Activated B cell treated with CpG ODN at 0.5 μM for 24 hours (primary cell): ENCODE measurements at regions of chr11 and their contacts with region 1.

Region 1: DNA sequence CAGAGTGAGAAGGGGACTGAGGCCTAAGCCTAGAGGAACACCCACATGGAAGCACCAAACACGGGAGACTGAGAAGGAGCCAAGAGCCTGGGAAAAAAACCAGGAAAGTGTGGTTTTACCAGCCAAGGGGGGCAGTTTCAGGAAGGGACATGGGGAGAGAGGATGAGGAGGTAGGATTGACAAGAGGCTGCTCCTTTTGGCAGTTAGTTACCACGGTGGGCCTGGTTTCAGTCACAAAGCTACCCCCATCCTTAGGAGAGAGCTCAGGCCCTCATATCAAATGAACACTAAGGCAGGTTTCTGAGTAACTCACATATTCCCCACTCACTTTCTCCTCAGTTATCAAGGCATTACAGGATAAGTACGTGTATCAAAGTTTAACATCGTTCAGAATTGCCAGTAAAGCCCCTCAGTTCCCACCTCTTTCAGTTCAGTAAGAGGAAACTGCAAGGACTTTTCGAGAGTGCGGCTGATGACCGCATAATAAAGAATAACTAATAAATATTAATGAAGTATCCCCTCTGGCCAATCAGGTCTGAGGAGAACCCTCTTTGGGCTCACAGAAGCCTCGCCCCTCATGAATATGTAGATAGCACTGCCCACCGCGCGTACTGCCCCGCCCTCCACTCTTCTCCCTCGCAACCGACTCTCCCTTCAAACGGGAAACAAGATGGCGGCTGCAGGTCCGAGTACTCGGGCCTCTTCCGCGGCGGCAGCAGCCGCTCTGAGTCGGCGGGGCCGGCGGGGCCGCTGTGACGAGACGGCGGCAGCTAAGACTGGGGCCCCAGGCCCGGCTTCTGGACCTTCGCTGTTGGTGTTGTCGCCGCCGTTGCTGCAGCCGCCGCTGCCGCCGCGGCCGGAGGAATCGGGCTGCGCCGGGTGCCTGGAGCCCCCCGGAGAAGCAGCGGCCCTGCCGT is at the start of gene RNF169:
- DNase-seq: peak; percentile 82
- ATAC-seq: peak; percentile 98
- H3K4me3 Mint-ChIP-seq: peak within 1 kb of the TSS; percentile 90
- H3K27ac Mint-ChIP-seq: peak within 1 kb of the TSS; percentile 95
- H3K4me1 Mint-ChIP-seq: peaks cover 32% of the 10 kb centered on the region
- H3K27me3 Mint-ChIP-seq: no peaks in the 10 kb centered on the region
- CTCF ChIP-seq: no peak
- total RNA-seq, gene RNF169: 20.4 and 22.2 TPM in 2 replicates

Region 2: DNA sequence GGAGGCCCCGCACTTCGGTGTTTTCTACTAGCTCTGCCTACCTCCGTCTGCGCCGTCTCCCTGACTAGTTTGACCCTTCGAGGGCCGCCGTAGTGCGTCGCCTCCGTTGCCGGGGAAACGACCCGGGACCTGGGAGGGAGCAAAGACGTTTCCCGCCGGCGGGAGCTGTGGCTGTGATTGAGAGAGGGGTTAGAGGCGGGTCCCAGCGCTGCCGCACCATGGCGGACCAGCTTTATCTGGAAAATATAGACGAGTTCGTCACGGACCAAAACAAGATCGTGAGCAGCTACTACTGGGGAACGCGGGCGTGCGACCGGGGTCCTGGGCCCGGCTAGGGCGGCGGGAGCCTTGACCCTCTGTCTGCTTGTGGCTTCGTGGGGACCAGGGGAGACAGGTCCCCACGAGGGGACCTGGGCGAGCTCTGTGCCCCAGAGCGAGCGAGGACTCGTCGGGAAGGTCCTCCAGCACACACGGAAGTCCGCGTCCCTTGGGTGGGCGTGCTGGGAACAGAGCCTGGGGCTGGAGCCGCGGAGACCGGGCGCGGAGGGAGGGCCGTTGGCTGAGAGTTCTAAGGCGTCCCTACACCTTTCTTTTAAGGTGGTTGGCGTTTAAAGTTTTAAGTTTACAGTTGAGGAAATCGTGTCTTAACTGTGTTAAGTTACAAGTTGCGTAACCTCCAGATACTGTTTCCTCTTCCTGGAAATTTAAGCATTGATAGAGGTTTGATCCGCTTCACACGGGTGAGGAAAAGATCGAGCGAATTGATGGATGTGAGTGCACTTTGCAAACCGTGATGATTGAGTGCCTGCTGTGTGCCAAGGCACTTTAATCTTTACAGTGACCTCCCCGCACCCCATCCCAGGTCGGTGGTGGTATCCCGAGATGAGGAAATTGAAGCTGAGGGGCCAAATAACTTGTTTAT is 155.8 kb before region 1 on chr11 and contains the start of gene POLD3:
- CTCF ChIA-PET with region 1: no interaction called
- POLR2A ChIA-PET with region 1: interaction called, 3 read pairs
- intact Hi-C with region 1: loop called (anchors 2 kb)
- DNase-seq: peak; percentile 83
- ATAC-seq: peak; percentile 99
- H3K4me3 Mint-ChIP-seq: peak within 1 kb of the TSS; percentile 94
- H3K27ac Mint-ChIP-seq: peak within 1 kb of the TSS; percentile 86
- H3K4me1 Mint-ChIP-seq: peaks cover 17% of the 10 kb centered on the region
- H3K27me3 Mint-ChIP-seq: no peaks in the 10 kb centered on the region
- CTCF ChIP-seq: no peak
- total RNA-seq, gene POLD3: 14.9 and 16.3 TPM in 2 replicates

Region 3: GRCh38 chr11:74773481-74773880 is 25.0 kb after region 1 on chr11:
- CTCF ChIA-PET with region 1: no interaction called
- POLR2A ChIA-PET with region 1: no interaction called
- intact Hi-C with region 1: loop called (anchors 2 kb)
- DNase-seq: no peak
- ATAC-seq: no peak
- H3K4me3 Mint-ChIP-seq: no peak overlapping the region
- H3K27ac Mint-ChIP-seq: no peak overlapping the region
- H3K4me1 Mint-ChIP-seq: peaks cover 47% of the 10 kb centered on the region
- H3K27me3 Mint-ChIP-seq: no peaks in the 10 kb centered on the region
- CTCF ChIP-seq: no peak

Region 4: DNA sequence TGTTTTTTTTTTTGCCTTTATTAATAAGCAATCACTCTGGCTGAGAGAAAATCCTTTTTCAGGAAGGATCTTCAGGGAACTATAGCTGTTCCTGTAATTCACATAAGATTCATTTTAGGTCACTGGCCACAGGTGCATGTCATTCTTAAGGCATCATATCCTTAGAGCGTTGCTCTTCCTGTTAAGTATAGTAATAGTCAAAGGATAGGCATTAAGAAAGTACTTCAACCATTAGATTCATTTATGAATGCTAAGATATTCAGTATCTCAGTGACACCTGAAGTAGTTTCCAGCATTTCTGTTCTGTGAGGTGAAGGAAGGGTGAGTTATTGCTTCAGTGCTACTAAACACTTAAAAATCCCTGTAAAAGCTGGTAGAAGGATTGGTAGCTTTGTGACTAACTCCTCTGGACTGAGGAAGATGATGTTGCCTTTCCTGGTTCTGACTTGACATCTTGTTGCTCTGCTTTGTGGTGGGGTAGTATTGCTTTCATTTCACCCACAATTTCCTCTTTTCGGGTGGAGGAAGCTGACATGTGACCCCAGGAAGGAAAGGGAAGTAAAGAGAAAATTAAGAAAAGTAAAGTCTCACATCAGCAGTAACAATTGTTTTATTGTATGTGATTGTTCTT is 34.9 kb after region 1 on chr11:
- CTCF ChIA-PET with region 1: no interaction called
- POLR2A ChIA-PET with region 1: interaction called, 7 read pairs
- intact Hi-C with region 1: loop called (anchors 1 kb)
- DNase-seq: no peak
- ATAC-seq: peak; percentile 86
- H3K4me3 Mint-ChIP-seq: peak overlapping the region; percentile 59
- H3K27ac Mint-ChIP-seq: peak overlapping the region; percentile 68
- H3K4me1 Mint-ChIP-seq: peaks cover 33% of the 10 kb centered on the region
- H3K27me3 Mint-ChIP-seq: no peaks in the 10 kb centered on the region
- CTCF ChIP-seq: no peak

Region 5: GRCh38 chr11:74870485-74870884 is 122.0 kb after region 1 on chr11:
- CTCF ChIA-PET with region 1: no interaction called
- POLR2A ChIA-PET with region 1: no interaction called
- intact Hi-C with region 1: no loop called
- DNase-seq: no peak
- ATAC-seq: no peak
- H3K4me3 Mint-ChIP-seq: no peak overlapping the region
- H3K27ac Mint-ChIP-seq: no peak overlapping the region
- H3K4me1 Mint-ChIP-seq: no peaks in the 10 kb centered on the region
- H3K27me3 Mint-ChIP-seq: no peaks in the 10 kb centered on the region
- CTCF ChIP-seq: no peak

Region 6: GRCh38 chr11:75445315-75445953 is 697.0 kb after region 1 on chr11:
- CTCF ChIA-PET with region 1: no interaction called
- POLR2A ChIA-PET with region 1: no interaction called
- intact Hi-C with region 1: no loop called
- DNase-seq: peak; percentile 69
- ATAC-seq: peak; percentile 98
- H3K4me3 Mint-ChIP-seq: no peak overlapping the region
- H3K27ac Mint-ChIP-seq: no peak overlapping the region
- H3K4me1 Mint-ChIP-seq: no peaks in the 10 kb centered on the region
- H3K27me3 Mint-ChIP-seq: no peaks in the 10 kb centered on the region
- CTCF ChIP-seq: no peak